PC-3 (cell line): ENCODE measurements at regions of chr5 and their contacts with region 1.

Region 1: DNA sequence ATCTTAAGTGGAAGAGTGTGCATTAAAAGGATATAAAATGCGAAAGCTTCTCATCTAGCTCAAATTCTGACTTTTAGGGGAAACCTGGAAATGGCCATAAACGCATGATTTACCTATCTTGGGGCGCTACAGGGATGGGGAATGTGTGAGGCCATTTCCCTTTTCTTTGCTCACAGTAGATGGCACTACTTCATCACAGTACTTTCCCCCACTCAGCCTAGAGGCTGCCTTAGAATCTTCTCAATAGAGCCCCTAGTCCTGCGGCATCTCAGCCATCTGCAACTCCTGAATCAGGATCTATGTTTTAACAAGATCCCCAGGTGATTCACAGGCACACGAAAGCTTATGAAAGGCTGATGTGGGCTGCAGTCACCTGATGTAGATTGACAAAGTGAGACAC is 110.8 kb downstream of the LHFPL2 start:
- DNase-seq: peak; percentile 65
- ATAC-seq: peak; percentile 89
- H3K4me3 ChIP-seq: no peak overlapping the region
- H3K27ac ChIP-seq: peak overlapping the region; percentile 40
- H3K4me1 ChIP-seq: peaks cover 7% of the 10 kb centered on the region
- H3K27me3 ChIP-seq: no peaks in the 10 kb centered on the region
- CTCF ChIP-seq: peak; percentile 62

Region 2: GRCh38 chr5:78467752-78468357 is 70.0 kb before region 1 on chr5:
- CTCF ChIA-PET with region 1: interaction called, 7 read pairs
- POLR2A ChIA-PET with region 1: no interaction called
- intact Hi-C with region 1: loop called (anchors 1 kb)
- DNase-seq: peak; percentile 54
- ATAC-seq: peak; percentile 73
- H3K4me3 ChIP-seq: no peak overlapping the region
- H3K27ac ChIP-seq: no peak overlapping the region
- H3K4me1 ChIP-seq: no peaks in the 10 kb centered on the region; the same call in 1 of the 2 replicates
- H3K27me3 ChIP-seq: no peaks in the 10 kb centered on the region
- CTCF ChIP-seq: peak; percentile 77

Region 3: GRCh38 chr5:78638423-78638822 is 100.6 kb after region 1 on chr5:
- CTCF ChIA-PET with region 1: no interaction called
- POLR2A ChIA-PET with region 1: no interaction called
- intact Hi-C with region 1: loop called (anchors 5 kb)
- DNase-seq: peak; percentile 95
- ATAC-seq: peak; percentile 92
- H3K4me3 ChIP-seq: no peak overlapping the region
- H3K27ac ChIP-seq: peak overlapping the region; percentile 87
- H3K4me1 ChIP-seq: peaks cover 56% of the 10 kb centered on the region
- H3K27me3 ChIP-seq: no peaks in the 10 kb centered on the region
- CTCF ChIP-seq: no peak

Region 4: GRCh38 chr5:78677777-78678668 is 140.2 kb after region 1 on chr5:
- CTCF ChIA-PET with region 1: no interaction called
- POLR2A ChIA-PET with region 1: no interaction called
- intact Hi-C with region 1: no loop called
- DNase-seq: peak; percentile 85
- ATAC-seq: peak; percentile 89
- H3K4me3 ChIP-seq: no peak overlapping the region
- H3K27ac ChIP-seq: peak overlapping the region; percentile 89
- H3K4me1 ChIP-seq: peaks cover 25% of the 10 kb centered on the region
- H3K27me3 ChIP-seq: no peaks in the 10 kb centered on the region
- CTCF ChIP-seq: no peak; the same call in 1 of the 2 replicates

Region 5: GRCh38 chr5:78886341-78887230 is 348.8 kb after region 1 on chr5:
- CTCF ChIA-PET with region 1: no interaction called
- POLR2A ChIA-PET with region 1: no interaction called
- intact Hi-C with region 1: loop called (anchors 10 kb)
- DNase-seq: peak; percentile 32
- ATAC-seq: no peak
- H3K4me3 ChIP-seq: no peak overlapping the region
- H3K27ac ChIP-seq: no peak overlapping the region
- H3K4me1 ChIP-seq: 0 out of 2 replicates have a peak, but pooled peaks cover 5% of the 10 kb centered on the region
- H3K27me3 ChIP-seq: no peaks in the 10 kb centered on the region
- CTCF ChIP-seq: peak; percentile 66

Region 6: DNA sequence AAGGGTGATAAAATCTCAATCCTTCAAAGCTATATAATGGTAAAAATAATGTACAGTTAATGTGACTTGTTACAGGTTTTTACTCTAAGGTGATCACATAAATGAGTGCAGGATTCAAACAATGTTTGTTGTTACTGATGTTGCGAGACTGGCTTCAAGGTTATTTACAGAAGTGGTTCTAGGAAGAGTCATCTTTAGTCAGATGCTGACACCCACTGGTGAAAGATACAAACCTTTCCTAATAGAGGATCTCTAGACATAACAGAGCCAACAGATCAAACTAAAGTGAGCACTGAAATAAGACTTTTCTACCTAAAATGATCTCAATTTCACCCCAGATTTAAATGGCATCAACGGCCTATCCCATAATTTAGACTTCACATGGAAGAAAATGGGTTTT is 427.1 kb after region 1 on chr5:
- CTCF ChIA-PET with region 1: no interaction called
- POLR2A ChIA-PET with region 1: no interaction called
- intact Hi-C with region 1: loop called (anchors 1 kb)
- DNase-seq: peak; percentile 64
- ATAC-seq: peak; percentile 82
- H3K4me3 ChIP-seq: no peak overlapping the region
- H3K27ac ChIP-seq: no peak overlapping the region
- H3K4me1 ChIP-seq: no peaks in the 10 kb centered on the region
- H3K27me3 ChIP-seq: no peaks in the 10 kb centered on the region
- CTCF ChIP-seq: peak; percentile 68